PC-3 (cell line): ENCODE measurements at regions of chr1 and their contacts with region 1.

Region 1: DNA sequence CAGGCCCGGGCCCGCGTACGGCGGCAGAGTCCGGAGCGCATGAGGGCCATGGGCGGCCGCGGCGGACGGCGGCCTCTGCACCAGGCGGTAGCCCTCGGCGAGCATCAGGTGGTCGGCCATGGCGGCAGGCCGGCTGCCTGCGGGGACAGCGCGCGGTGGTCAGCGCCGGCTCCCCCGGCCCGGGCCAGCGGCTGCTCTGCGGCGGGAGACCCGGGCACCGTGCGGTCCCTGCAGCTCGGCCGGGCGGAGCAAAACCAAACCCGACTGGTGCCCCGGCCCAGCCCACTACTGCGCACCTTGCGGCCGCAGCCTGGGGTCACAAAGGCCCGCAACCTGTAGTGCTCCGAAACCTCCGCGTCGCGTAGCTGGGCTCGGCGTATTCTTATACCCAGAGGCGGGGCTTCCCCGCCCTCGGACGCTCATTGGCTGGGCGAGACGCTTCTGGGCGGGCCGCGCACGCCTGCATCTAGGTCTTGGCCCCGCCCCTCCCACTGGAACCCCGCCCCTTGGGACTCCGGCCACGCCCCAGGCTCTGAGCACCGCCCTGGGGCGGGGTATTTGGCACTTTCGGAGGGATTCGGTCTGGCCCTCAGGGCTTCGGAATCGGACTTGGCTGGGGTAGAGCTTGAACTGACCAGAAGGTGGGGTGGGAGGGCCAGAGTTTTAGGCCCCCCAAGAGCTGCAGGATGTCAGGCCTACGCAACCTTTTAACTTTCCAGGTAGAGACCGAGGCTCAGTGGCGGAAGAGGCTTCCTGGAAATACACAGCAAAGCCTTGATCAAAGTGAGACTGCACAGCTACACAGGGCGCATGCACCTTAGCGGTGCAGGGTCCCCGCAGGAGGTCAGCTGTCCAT is at the start of gene CITED4:
- DNase-seq: peak; percentile 96
- ATAC-seq: peak; percentile 95
- H3K4me3 ChIP-seq: peak within 1 kb of the TSS; percentile 73
- H3K27ac ChIP-seq: no peak within 1 kb of the TSS
- H3K4me1 ChIP-seq: peaks cover 7% of the 10 kb centered on the region
- H3K27me3 ChIP-seq: no peaks in the 10 kb centered on the region
- CTCF ChIP-seq: peak; percentile 43; the same call in 1 of the 2 replicates
- total RNA-seq, gene CITED4: 10.6 and 12.0 TPM in 2 replicates

Region 2: DNA sequence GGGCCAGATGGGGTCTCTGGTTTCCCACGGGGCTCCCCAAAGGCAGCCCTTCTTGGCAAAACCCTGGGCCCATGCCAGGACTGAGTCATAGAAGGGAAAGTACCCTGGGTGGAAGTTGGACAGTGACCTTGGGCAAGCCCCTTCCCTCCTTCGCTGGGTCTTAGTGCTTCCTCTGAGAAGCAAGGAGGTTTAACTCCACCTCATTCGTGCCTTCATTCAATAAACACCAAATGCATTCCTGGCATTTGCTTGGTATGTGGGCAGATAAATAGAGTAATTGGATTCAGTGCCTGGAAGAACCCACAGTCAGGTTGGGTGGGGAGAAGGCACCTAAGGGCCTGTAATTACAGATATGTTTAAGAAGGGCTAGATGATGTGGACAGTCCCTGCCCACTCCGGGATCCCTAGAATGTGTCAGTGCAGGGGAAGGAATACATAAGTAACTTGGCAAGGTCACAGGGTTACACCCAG is 36.2 kb after region 1 on chr1:
- CTCF ChIA-PET with region 1: no interaction called
- POLR2A ChIA-PET with region 1: no interaction called
- intact Hi-C with region 1: loop called (anchors 1 kb)
- DNase-seq: peak; percentile 54
- ATAC-seq: no peak; the same call in 1 of the 2 replicates
- H3K4me3 ChIP-seq: no peak overlapping the region
- H3K27ac ChIP-seq: peak overlapping the region; percentile 74
- H3K4me1 ChIP-seq: peaks cover 53% of the 10 kb centered on the region
- H3K27me3 ChIP-seq: no peaks in the 10 kb centered on the region
- CTCF ChIP-seq: no peak